Pancreas (tissue), 10 donors: ENCODE measurements at regions of chr5 and their contacts with region 1.

Region 1: DNA sequence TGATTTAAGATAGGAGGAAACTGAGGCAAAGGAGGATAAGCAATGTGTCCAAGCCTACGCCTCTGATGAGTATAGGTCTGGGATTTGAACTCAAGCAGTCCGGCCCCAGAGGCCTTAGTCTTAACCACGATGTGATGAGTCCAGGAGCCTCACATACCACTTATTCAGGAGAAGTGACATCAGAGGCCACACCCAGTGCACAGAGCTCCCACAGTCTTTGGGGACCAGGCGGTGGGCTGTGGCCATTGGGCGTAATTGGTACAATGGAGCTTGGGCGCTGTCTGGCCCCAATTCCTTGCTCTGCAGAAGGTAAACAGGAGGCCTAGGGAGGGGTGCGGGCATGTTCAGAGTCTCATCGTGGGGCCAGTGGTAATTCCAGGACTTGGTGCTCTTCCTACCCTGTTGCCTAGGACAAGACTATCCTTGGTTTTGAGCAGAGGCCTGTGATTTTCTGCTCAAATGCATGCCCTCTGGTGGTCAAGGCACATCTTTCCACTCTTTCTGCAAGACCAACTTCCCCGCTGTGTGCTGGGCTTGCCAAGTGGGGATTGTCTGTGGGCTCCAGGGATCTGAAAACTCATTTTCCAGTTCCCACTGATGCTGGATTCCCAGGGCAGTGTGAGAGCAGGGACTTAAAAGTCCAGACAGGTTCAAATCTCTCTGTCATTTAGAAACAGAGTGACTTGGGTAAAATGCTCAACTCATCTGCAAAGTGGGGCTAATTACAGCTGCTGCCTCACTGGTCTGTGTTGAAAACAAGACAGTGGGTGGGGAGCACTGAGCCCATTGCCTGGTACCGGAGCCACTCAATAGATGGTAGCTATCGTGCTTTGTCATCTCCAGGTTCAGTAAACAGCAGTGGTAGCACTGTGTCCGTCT is 15.8 kb downstream of the NDST1 start:
- DNase-seq: peak in 1 of 6 donors; percentile 61
- ATAC-seq: peak; percentile 67 to 73 (median 70)
- H3K4me3 ChIP-seq: no peak overlapping the region
- H3K27ac ChIP-seq: peak overlapping the region in 2 of 4 donors; percentile 51 to 62
- H3K4me1 ChIP-seq: peaks cover 35 to 47% (median 40%) of the 10 kb centered on the region in 3 donors
- H3K27me3 ChIP-seq: no peaks in the 10 kb centered on the region
- CTCF ChIP-seq: peak in 1 of 4 donors; percentile 55

Region 2: GRCh38 chr5:150458819-150459557 is 64.7 kb before region 1 on chr5:
- intact Hi-C with region 1: loop called in 1 of 3 experiments (anchors 5 kb)
- DNase-seq: peak; percentile 61 to 95 (median 86)
- ATAC-seq: peak; percentile 97 to 99 (median 98)
- H3K4me3 ChIP-seq: peak overlapping the region in 1 of 4 donors; percentile 27
- H3K27ac ChIP-seq: no peak overlapping the region
- H3K4me1 ChIP-seq: no peaks in the 10 kb centered on the region
- H3K27me3 ChIP-seq: no peaks in the 10 kb centered on the region
- CTCF ChIP-seq: peak; percentile 69 to 85 (median 72)

Region 3: GRCh38 chr5:150469718-150470469 is 53.8 kb before region 1 on chr5:
- intact Hi-C with region 1: loop called in 1 of 3 experiments (anchors 10 kb)
- DNase-seq: no peak
- ATAC-seq: peak in 2 of 4 donors; percentile 43 to 59
- H3K4me3 ChIP-seq: no peak overlapping the region
- H3K27ac ChIP-seq: no peak overlapping the region
- H3K4me1 ChIP-seq: no peaks in the 10 kb centered on the region
- H3K27me3 ChIP-seq: no peaks in the 10 kb centered on the region
- CTCF ChIP-seq: no peak

Region 4: GRCh38 chr5:150486402-150487198 is 37.1 kb before region 1 on chr5:
- intact Hi-C with region 1: loop called in 1 of 3 experiments (anchors 5 kb)
- DNase-seq: peak; percentile 79 to 88 (median 85)
- ATAC-seq: peak; percentile 55 to 70 (median 68)
- H3K4me3 ChIP-seq: peak overlapping the region; percentile 83 to 97 (median 94)
- H3K27ac ChIP-seq: peak overlapping the region; percentile 76 to 90 (median 85)
- H3K4me1 ChIP-seq: peaks cover 15 to 48% (median 27%) of the 10 kb centered on the region in 3 donors
- H3K27me3 ChIP-seq: no peaks in the 10 kb centered on the region
- CTCF ChIP-seq: no peak